Ovary (tissue), 10 donors: ENCODE measurements at regions of chr4 and their contacts with region 1.

Region 1: GRCh38 chr4:157220371-157220881 is at the start of gene GRIA2:
- DNase-seq: peak in 3 of 5 donors; percentile 17 to 67 (median 53)
- H3K4me3 ChIP-seq: peak within 1 kb of the TSS; percentile 38
- H3K27ac ChIP-seq: no peak within 1 kb of the TSS
- H3K4me1 ChIP-seq: peaks cover 1% of the 10 kb centered on the region
- H3K27me3 ChIP-seq: no peaks in the 10 kb centered on the region
- CTCF ChIP-seq: no peak
- EP300 ChIP-seq: no peak
- POLR2A ChIP-seq: no peak
- total RNA-seq, gene GRIA2: 0.08 to 4.8 (median 1.00) TPM in 5 of 7 donors, not detected in the others

Region 2: DNA sequence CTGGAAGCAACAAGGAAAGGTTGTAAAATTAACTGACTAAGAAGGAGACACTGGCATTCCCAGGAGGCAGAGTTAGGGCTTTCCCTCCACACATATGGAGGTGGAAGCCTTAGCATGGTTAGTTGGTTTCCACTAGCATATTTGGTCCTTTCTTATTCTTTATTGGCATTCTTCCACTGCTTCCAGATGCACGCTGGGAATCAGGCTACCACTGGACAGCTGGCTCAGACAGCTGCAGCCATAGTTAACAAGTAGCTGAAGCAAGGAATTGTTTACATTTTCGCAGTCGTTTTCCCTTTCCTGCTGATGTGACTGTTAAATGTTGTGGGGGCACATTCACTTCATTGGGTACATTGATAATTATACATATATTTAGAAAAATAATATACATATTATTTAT is 169.3 kb after region 1 on chr4:
- intact Hi-C with region 1: no loop called
- DNase-seq: no peak
- H3K4me3 ChIP-seq: no peak overlapping the region
- H3K27ac ChIP-seq: no peak overlapping the region
- H3K4me1 ChIP-seq: no peaks in the 10 kb centered on the region
- H3K27me3 ChIP-seq: no peaks in the 10 kb centered on the region
- CTCF ChIP-seq: no peak
- EP300 ChIP-seq: no peak
- POLR2A ChIP-seq: no peak

Region 3: GRCh38 chr4:157978680-157979361 is 758.4 kb after region 1 on chr4:
- intact Hi-C with region 1: loop called in 1 of 4 experiments (anchors 10 kb)
- DNase-seq: peak; percentile 21 to 62 (median 49)
- H3K4me3 ChIP-seq: no peak overlapping the region
- H3K27ac ChIP-seq: no peak overlapping the region
- H3K4me1 ChIP-seq: no peaks in the 10 kb centered on the region
- H3K27me3 ChIP-seq: no peaks in the 10 kb centered on the region
- CTCF ChIP-seq: peak; percentile 53 to 66 (median 65)
- EP300 ChIP-seq: no peak
- POLR2A ChIP-seq: no peak